Naive thymus-derived CD4-positive, alpha-beta T cell (primary cell): ENCODE measurements at regions of chr11 and their contacts with region 1.

Region 1: DNA sequence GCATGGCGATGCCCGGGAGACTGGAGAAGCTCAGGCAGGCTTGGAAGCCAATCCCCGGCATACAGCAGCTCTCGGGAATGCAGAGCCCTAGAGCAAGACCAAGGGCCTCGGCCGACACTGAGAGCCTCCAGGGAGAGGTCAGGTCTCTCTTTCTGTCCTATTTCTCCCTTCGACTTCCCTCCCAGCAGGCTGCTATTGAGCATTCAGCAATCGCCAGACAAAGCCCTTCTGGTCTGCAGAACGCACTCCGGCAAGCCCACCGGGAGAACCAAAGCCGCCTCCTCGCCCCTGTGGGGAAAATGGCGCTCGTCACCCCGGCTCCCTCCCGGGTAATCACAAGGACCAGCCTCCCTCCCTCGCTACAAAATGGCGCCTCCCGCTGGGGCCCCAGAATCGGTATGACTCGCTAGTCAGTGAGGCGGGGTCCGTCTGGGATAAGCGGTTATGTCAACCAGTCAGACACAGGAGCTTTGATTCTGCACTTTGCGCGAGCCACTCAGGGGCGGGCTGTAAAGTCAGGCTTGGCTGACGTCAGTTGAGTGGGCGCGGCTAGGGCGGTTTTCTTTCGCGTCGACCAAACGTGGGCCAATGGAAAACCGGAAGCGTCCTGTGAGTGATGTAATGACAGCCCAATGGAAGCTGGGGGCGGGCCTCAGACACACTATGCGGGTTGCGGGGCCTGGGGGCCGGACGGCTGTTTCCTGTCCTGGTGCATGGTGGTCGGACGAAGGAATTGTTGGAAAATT is at the start of gene ZNF143:
- DNase-seq: peak; percentile 95 to 100 (median 100)
- ATAC-seq: peak; percentile 92
- H3K4me3 ChIP-seq: peak within 1 kb of the TSS; percentile 93
- H3K4me3 Mint-ChIP-seq: peak within 1 kb of the TSS; percentile 84 to 98 (median 96)
- H3K27ac ChIP-seq: peak within 1 kb of the TSS; percentile 98
- H3K27ac Mint-ChIP-seq: peak within 1 kb of the TSS; percentile 97 to 99 (median 99)
- H3K4me1 ChIP-seq: peaks cover 9 to 19% of the 10 kb centered on the region in 2 donors
- H3K4me1 Mint-ChIP-seq: peaks cover 21 to 34% (median 26%) of the 10 kb centered on the region in 7 donors
- H3K27me3 ChIP-seq: no peaks in the 10 kb centered on the region
- H3K27me3 Mint-ChIP-seq: no peaks in the 10 kb centered on the region
- total RNA-seq, gene ZNF143: 29.6 to 47.5 (median 34.4) TPM

Region 2: GRCh38 chr11:8964324-8965320 is 495.9 kb before region 1 on chr11 and contains the start of gene TMEM9B:
- CTCF ChIA-PET with region 1: no interaction called
- POLR2A ChIA-PET with region 1: interaction called, 7 read pairs
- intact Hi-C with region 1: loop called (anchors 1 kb)
- DNase-seq: peak; percentile 35 to 85 (median 66)
- ATAC-seq: peak; percentile 90
- H3K4me3 ChIP-seq: peak within 1 kb of the TSS; percentile 96
- H3K4me3 Mint-ChIP-seq: peak within 1 kb of the TSS; percentile 94 to 99 (median 98)
- H3K27ac ChIP-seq: peak within 1 kb of the TSS; percentile 92
- H3K27ac Mint-ChIP-seq: peak within 1 kb of the TSS; percentile 94 to 99 (median 98)
- H3K4me1 ChIP-seq: peaks cover 13 to 17% of the 10 kb centered on the region in 2 donors
- H3K4me1 Mint-ChIP-seq: peaks cover 17 to 45% (median 32%) of the 10 kb centered on the region in 7 donors
- H3K27me3 ChIP-seq: no peaks in the 10 kb centered on the region
- H3K27me3 Mint-ChIP-seq: no peaks in the 10 kb centered on the region
- total RNA-seq, gene TMEM9B: 16.2 to 33.6 (median 30.6) TPM

Region 3: DNA sequence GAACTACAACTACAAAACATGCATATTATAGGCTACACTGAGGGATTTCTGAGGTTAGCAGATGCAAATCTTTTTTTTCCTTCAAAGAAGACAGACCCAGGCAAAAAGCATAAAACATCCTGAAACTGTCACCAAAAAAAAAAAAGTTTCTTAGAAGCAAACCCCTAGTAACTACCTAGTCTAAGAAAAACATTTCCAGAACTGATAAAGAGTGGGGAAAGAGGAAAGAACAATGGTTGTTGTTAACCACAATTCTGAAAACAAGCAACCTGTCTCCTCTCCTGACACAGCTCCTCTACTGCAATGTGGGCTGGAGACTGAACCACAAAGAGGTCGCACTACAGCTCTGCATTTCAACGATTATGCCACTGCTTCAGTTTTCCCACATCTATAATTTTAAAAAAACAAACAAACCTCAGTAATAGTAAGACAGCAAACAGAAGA is 210.3 kb before region 1 on chr11:
- CTCF ChIA-PET with region 1: no interaction called
- POLR2A ChIA-PET with region 1: interaction called, 3 read pairs
- intact Hi-C with region 1: loop called in 1 of 2 experiments (anchors 1 kb)
- DNase-seq: peak in 8 of 9 donors; percentile 40 to 83 (median 70)
- ATAC-seq: peak; percentile 92
- H3K4me3 ChIP-seq: peak overlapping the region; percentile 29
- H3K4me3 Mint-ChIP-seq: peak overlapping the region; percentile 62 to 84 (median 75)
- H3K27ac ChIP-seq: peak overlapping the region; percentile 62
- H3K27ac Mint-ChIP-seq: peak overlapping the region; percentile 67 to 94 (median 83)
- H3K4me1 ChIP-seq: peaks cover 14 to 72% of the 10 kb centered on the region in 2 donors
- H3K4me1 Mint-ChIP-seq: peaks cover 44 to 91% (median 69%) of the 10 kb centered on the region in 7 donors
- H3K27me3 ChIP-seq: no peaks in the 10 kb centered on the region
- H3K27me3 Mint-ChIP-seq: no peaks in the 10 kb centered on the region

Region 4: DNA sequence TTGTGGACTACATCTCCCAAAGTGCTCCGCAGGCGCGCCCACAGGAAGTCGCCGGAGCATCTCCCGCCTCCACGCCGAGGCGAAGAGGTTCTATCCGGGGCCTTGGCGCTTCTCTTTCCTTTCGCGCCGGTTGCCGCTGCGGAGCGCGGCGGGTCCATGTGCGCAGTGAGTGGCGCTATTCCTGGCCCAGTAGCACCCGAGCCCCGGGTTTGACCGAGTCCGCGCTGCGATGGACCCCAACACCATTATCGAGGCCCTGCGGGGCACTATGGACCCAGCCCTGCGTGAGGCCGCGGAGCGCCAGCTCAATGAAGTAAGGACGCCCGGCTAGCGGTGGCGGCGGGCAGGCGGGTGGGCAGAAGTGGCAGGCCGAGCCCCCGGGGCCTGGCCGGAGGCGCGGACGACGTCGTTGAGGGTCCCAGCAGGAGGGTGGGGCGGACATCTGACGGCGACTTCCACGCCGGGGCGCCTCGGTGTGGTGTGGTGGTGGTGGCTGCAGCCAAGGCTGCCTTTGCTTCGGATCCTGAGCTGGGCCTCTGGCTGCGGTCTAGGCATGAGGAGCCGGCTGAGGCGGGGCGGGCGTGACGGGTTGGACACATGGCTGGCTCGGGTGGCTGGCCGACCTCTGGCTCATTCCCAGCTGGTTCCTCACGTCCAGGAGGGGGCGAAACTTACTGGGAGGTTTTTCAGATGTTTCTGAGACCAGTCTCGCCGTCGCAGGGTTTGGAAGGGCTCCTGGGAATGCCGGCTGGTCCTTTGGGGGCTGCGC is 75.8 kb before region 1 on chr11 and contains the start of gene IPO7:
- CTCF ChIA-PET with region 1: interaction called, 3 read pairs
- POLR2A ChIA-PET with region 1: interaction called, 35 read pairs
- intact Hi-C with region 1: loop called (anchors 1 kb)
- DNase-seq: peak; percentile 68 to 88 (median 84)
- ATAC-seq: peak; percentile 99
- H3K4me3 ChIP-seq: peak within 1 kb of the TSS; percentile 78
- H3K4me3 Mint-ChIP-seq: peak within 1 kb of the TSS; percentile 89 to 98 (median 94)
- H3K27ac ChIP-seq: peak within 1 kb of the TSS; percentile 88
- H3K27ac Mint-ChIP-seq: peak within 1 kb of the TSS; percentile 79 to 94 (median 91)
- H3K4me1 ChIP-seq: peaks cover 11 to 15% of the 10 kb centered on the region in 2 donors
- H3K4me1 Mint-ChIP-seq: peaks cover 25 to 51% (median 38%) of the 10 kb centered on the region in 7 donors
- H3K27me3 ChIP-seq: no peaks in the 10 kb centered on the region
- H3K27me3 Mint-ChIP-seq: no peaks in the 10 kb centered on the region
- total RNA-seq, gene IPO7: 47.3 to 105 (median 61.3) TPM

Region 5: GRCh38 chr11:9562728-9563115 is 102.2 kb after region 1 on chr11:
- CTCF ChIA-PET with region 1: no interaction called
- POLR2A ChIA-PET with region 1: no interaction called
- intact Hi-C with region 1: no loop called
- DNase-seq: no peak
- ATAC-seq: no peak
- H3K4me3 ChIP-seq: no peak overlapping the region
- H3K4me3 Mint-ChIP-seq: no peak overlapping the region
- H3K27ac ChIP-seq: no peak overlapping the region
- H3K27ac Mint-ChIP-seq: no peak overlapping the region
- H3K4me1 ChIP-seq: peaks cover 0 to 8% of the 10 kb centered on the region in 2 donors
- H3K4me1 Mint-ChIP-seq: peaks cover 0 to 22% (median 0%) of the 10 kb centered on the region in 7 donors
- H3K27me3 ChIP-seq: no peaks in the 10 kb centered on the region
- H3K27me3 Mint-ChIP-seq: peaks cover 0 to 8% (median 0%) of the 10 kb centered on the region in 5 donors

Region 6: GRCh38 chr11:9573052-9573774 is 112.7 kb after region 1 on chr11 and contains the start of gene WEE1:
- CTCF ChIA-PET with region 1: no interaction called
- POLR2A ChIA-PET with region 1: interaction called, 8 read pairs
- intact Hi-C with region 1: loop called in 1 of 2 experiments (anchors 1 kb)
- DNase-seq: peak; percentile 84 to 99 (median 88)
- ATAC-seq: peak; percentile 95
- H3K4me3 ChIP-seq: peak within 1 kb of the TSS; percentile 78
- H3K4me3 Mint-ChIP-seq: peak within 1 kb of the TSS; percentile 74 to 94 (median 85)
- H3K27ac ChIP-seq: peak within 1 kb of the TSS; percentile 73
- H3K27ac Mint-ChIP-seq: peak within 1 kb of the TSS in 7 of 9 donors; percentile 43 to 91 (median 59)
- H3K4me1 ChIP-seq: peaks cover 9 to 11% of the 10 kb centered on the region in 2 donors
- H3K4me1 Mint-ChIP-seq: peaks cover 0 to 43% (median 19%) of the 10 kb centered on the region in 7 donors
- H3K27me3 ChIP-seq: peaks cover 0 to 3% of the 10 kb centered on the region in 2 donors
- H3K27me3 Mint-ChIP-seq: peaks cover 3 to 22% (median 11%) of the 10 kb centered on the region in 5 donors
- total RNA-seq, gene WEE1: 0.43 to 47.6 (median 1.9) TPM

Region 7: GRCh38 chr11:10247011-10247410 is 786.5 kb after region 1 on chr11:
- CTCF ChIA-PET with region 1: no interaction called
- POLR2A ChIA-PET with region 1: no interaction called
- intact Hi-C with region 1: no loop called
- DNase-seq: no peak
- ATAC-seq: no peak
- H3K4me3 ChIP-seq: no peak overlapping the region
- H3K4me3 Mint-ChIP-seq: no peak overlapping the region
- H3K27ac ChIP-seq: no peak overlapping the region
- H3K27ac Mint-ChIP-seq: peak overlapping the region in 1 of 9 donors; percentile 36
- H3K4me1 ChIP-seq: no peaks in the 10 kb centered on the region
- H3K4me1 Mint-ChIP-seq: peaks cover 0 to 12% (median 7%) of the 10 kb centered on the region in 7 donors
- H3K27me3 ChIP-seq: no peaks in the 10 kb centered on the region
- H3K27me3 Mint-ChIP-seq: peaks cover 0 to 2% (median 0%) of the 10 kb centered on the region in 5 donors

Region 8: DNA sequence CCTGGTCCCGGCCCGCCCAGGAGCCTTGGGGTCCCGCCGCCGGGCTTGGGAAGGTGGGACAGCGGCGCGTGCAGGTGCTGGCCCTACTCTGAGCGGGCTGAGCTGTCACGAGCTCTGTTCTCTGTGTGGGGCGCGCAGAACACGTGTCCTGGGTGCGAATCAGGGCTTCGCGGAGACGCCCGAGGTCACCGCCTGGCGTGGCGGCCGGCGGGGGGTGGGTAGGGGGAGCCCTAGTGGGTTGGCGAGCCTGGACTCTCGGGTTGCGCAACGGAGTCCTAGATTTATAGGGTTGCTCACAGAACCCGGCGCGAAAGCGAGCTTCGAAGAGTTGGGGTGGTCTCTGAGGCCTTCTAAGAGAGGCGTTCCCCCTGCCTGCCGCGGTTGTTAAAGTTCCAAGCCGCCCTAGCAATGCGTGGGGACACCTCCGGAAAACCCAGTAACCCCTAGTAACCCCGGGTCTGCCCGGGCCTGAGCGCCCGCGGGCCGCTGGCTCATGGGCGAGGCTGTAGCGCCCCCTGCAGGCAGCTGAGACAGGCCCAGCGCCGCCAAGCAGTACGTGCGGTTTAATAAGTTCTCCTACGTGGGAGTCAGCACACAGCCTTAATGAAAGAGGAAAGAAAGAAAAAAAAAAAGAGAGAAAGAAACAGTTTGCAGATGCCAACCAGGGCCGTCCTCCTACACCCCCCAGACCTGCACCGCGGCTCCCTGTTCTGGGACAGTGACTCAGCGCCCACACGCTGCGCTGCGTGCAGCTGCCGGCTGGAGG is 847.1 kb after region 1 on chr11:
- CTCF ChIA-PET with region 1: no interaction called
- POLR2A ChIA-PET with region 1: no interaction called
- intact Hi-C with region 1: loop called in 1 of 2 experiments (anchors 2 kb)
- DNase-seq: peak; percentile 73 to 88 (median 83)
- ATAC-seq: peak; percentile 83
- H3K4me3 ChIP-seq: peak overlapping the region; percentile 99
- H3K4me3 Mint-ChIP-seq: peak overlapping the region; percentile 64 to 100 (median 95)
- H3K27ac ChIP-seq: no peak overlapping the region
- H3K27ac Mint-ChIP-seq: peak overlapping the region in 6 of 9 donors; percentile 15 to 85 (median 46)
- H3K4me1 ChIP-seq: peaks cover 15 to 37% of the 10 kb centered on the region in 2 donors
- H3K4me1 Mint-ChIP-seq: peaks cover 25 to 57% (median 38%) of the 10 kb centered on the region in 7 donors
- H3K27me3 ChIP-seq: peaks cover 3 to 14% of the 10 kb centered on the region in 2 donors
- H3K27me3 Mint-ChIP-seq: peaks cover 31 to 54% (median 44%) of the 10 kb centered on the region in 5 donors